ENCODE measurements at regions of chr13 and their contacts with region 1.

Region 1: GRCh38 chr13:109816112-109816818 is 29.9 kb upstream of the IRS2 start:
- DNase-seq: no peak
- H3K4me3 ChIP-seq: no peak overlapping the region
- H3K27ac ChIP-seq: no peak overlapping the region
- H3K4me1 ChIP-seq: no peaks in the 10 kb centered on the region
- H3K27me3 ChIP-seq: no peaks in the 10 kb centered on the region
- CTCF ChIP-seq: no peak
- EP300 ChIP-seq: no peak
- POLR2A ChIP-seq: no peak

Region 2: GRCh38 chr13:109737606-109738005 is 78.7 kb before region 1 on chr13:
- intact Hi-C with region 1: loop called (anchors 2 kb)
- DNase-seq: no peak
- H3K4me3 ChIP-seq: no peak overlapping the region
- H3K27ac ChIP-seq: no peak overlapping the region
- H3K4me1 ChIP-seq: no peaks in the 10 kb centered on the region
- H3K27me3 ChIP-seq: no peaks in the 10 kb centered on the region
- CTCF ChIP-seq: no peak
- EP300 ChIP-seq: no peak
- POLR2A ChIP-seq: no peak

Measured in sigmoid colon (tissue), 7 donors.